ENCODE measurements at regions of chrX and their contacts with region 1.

Region 1: GRCh38 chrX:17046478-17047097 is 100.1 kb downstream of the REPS2 start:
- DNase-seq: peak; percentile 61
- ATAC-seq: peak; percentile 45
- H3K4me3 ChIP-seq: no peak overlapping the region
- H3K4me3 Mint-ChIP-seq: no peak overlapping the region
- H3K27ac ChIP-seq: no peak overlapping the region
- H3K27ac Mint-ChIP-seq: no peak overlapping the region
- H3K4me1 ChIP-seq: peaks cover 0 to 2% of the 10 kb centered on the region in 2 donors
- H3K4me1 Mint-ChIP-seq: peaks cover 2% of the 10 kb centered on the region
- H3K27me3 ChIP-seq: no peaks in the 10 kb centered on the region
- H3K27me3 Mint-ChIP-seq: no peaks in the 10 kb centered on the region
- CTCF ChIP-seq: peak; percentile 68

Region 2: GRCh38 chrX:16819634-16820033 is 227.0 kb before region 1 on chrX:
- CTCF ChIA-PET with region 1: interaction called, 12 read pairs
- POLR2A ChIA-PET with region 1: no interaction called
- intact Hi-C with region 1: no loop called
- DNase-seq: no peak
- ATAC-seq: no peak
- H3K4me3 ChIP-seq: no peak overlapping the region
- H3K4me3 Mint-ChIP-seq: no peak overlapping the region
- H3K27ac ChIP-seq: no peak overlapping the region
- H3K27ac Mint-ChIP-seq: no peak overlapping the region
- H3K4me1 ChIP-seq: no peaks in the 10 kb centered on the region
- H3K4me1 Mint-ChIP-seq: peaks cover 4% of the 10 kb centered on the region
- H3K27me3 ChIP-seq: no peaks in the 10 kb centered on the region
- H3K27me3 Mint-ChIP-seq: no peaks in the 10 kb centered on the region
- CTCF ChIP-seq: no peak

Region 3: GRCh38 chrX:16920075-16920474 is 126.5 kb before region 1 on chrX:
- CTCF ChIA-PET with region 1: no interaction called
- POLR2A ChIA-PET with region 1: no interaction called
- intact Hi-C with region 1: no loop called
- DNase-seq: no peak
- ATAC-seq: no peak
- H3K4me3 ChIP-seq: no peak overlapping the region
- H3K4me3 Mint-ChIP-seq: no peak overlapping the region
- H3K27ac ChIP-seq: no peak overlapping the region
- H3K27ac Mint-ChIP-seq: no peak overlapping the region
- H3K4me1 ChIP-seq: no peaks in the 10 kb centered on the region
- H3K4me1 Mint-ChIP-seq: no peaks in the 10 kb centered on the region
- H3K27me3 ChIP-seq: no peaks in the 10 kb centered on the region
- H3K27me3 Mint-ChIP-seq: peaks cover 6% of the 10 kb centered on the region
- CTCF ChIP-seq: no peak

Region 4: DNA sequence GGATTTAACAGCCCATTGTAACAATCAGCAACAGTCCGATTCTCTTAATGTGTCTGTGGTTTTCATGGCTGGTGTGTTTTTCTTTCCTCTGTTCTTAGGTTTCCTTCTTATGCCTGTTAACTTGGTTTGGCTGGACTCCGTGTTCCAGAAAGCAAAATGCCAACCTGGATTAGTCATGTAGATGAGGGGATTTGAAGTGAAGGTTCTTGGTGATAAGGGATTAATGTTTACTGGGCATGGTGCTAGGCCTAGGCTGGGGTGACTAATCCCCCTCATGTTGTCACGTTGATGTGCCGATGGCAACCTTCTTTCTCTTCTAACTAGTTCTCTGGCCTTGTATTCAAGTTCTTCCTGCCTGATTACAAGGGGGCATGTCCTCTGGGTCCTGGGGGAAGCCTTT is 14.2 kb before region 1 on chrX:
- CTCF ChIA-PET with region 1: interaction called, 10 read pairs
- POLR2A ChIA-PET with region 1: no interaction called
- intact Hi-C with region 1: no loop called
- DNase-seq: no peak
- ATAC-seq: no peak
- H3K4me3 ChIP-seq: no peak overlapping the region
- H3K4me3 Mint-ChIP-seq: no peak overlapping the region
- H3K27ac ChIP-seq: no peak overlapping the region
- H3K27ac Mint-ChIP-seq: no peak overlapping the region
- H3K4me1 ChIP-seq: peaks cover 0 to 3% of the 10 kb centered on the region in 2 donors
- H3K4me1 Mint-ChIP-seq: peaks cover 7% of the 10 kb centered on the region
- H3K27me3 ChIP-seq: no peaks in the 10 kb centered on the region
- H3K27me3 Mint-ChIP-seq: no peaks in the 10 kb centered on the region
- CTCF ChIP-seq: no peak